Activated B cell treated with CpG ODN at 0.5 μM for 24 hours (primary cell): ENCODE measurements at regions of chr9 and their contacts with region 1.

Region 1: GRCh38 chr9:96777426-96777864 is 442 bp downstream of the ZNF510 start:
- DNase-seq: no peak
- ATAC-seq: no peak
- H3K4me3 Mint-ChIP-seq: peak overlapping the region; percentile 99
- H3K27ac Mint-ChIP-seq: peak overlapping the region; percentile 96
- H3K4me1 Mint-ChIP-seq: peaks cover 25% of the 10 kb centered on the region
- H3K27me3 Mint-ChIP-seq: no peaks in the 10 kb centered on the region
- CTCF ChIP-seq: no peak

Region 2: GRCh38 chr9:96686548-96687335 is 90.7 kb before region 1 on chr9:
- CTCF ChIA-PET with region 1: no interaction called
- POLR2A ChIA-PET with region 1: no interaction called
- intact Hi-C with region 1: loop called (anchors 2 kb)
- DNase-seq: peak; percentile 78
- ATAC-seq: peak; percentile 97
- H3K4me3 Mint-ChIP-seq: peak overlapping the region; percentile 89
- H3K27ac Mint-ChIP-seq: peak overlapping the region; percentile 79
- H3K4me1 Mint-ChIP-seq: peaks cover 10% of the 10 kb centered on the region
- H3K27me3 Mint-ChIP-seq: no peaks in the 10 kb centered on the region
- CTCF ChIP-seq: no peak

Region 3: DNA sequence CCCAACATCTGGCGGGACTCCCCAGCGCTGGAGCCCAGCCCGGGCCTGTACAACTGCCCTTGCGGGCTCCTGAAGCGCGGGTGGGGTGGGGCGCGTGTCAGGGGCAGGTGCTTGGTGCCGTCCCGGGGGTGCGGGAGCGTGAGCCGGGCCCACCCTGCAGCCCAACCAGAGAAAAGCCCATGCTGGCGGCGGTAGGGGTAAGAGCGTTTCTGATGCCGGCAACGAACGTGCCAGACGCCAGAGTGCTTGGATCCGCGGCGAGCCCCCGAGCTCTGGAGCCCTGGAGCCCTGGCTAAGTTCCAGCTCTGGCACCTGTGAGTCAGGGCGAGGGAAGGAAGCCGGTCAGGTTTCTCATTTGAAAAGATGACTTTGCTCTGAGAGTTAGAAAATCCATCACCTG is 57.5 kb before region 1 on chr9:
- CTCF ChIA-PET with region 1: no interaction called
- POLR2A ChIA-PET with region 1: no interaction called
- intact Hi-C with region 1: no loop called
- DNase-seq: no peak
- ATAC-seq: no peak
- H3K4me3 Mint-ChIP-seq: peak overlapping the region; percentile 58
- H3K27ac Mint-ChIP-seq: no peak overlapping the region
- H3K4me1 Mint-ChIP-seq: peaks cover 15% of the 10 kb centered on the region
- H3K27me3 Mint-ChIP-seq: peaks cover 15% of the 10 kb centered on the region
- CTCF ChIP-seq: no peak